ENCODE measurements at regions of chr3 and their contacts with region 1.

Region 1: GRCh38 chr3:196684548-196685407 is 27.3 kb downstream of the CEP19 start:
- DNase-seq: no peak
- ATAC-seq: peak; percentile 67

Region 2: GRCh38 chr3:196471551-196471950 is 213.2 kb before region 1 on chr3:
- intact Hi-C with region 1: no loop called
- DNase-seq: no peak
- ATAC-seq: no peak

Region 3: DNA sequence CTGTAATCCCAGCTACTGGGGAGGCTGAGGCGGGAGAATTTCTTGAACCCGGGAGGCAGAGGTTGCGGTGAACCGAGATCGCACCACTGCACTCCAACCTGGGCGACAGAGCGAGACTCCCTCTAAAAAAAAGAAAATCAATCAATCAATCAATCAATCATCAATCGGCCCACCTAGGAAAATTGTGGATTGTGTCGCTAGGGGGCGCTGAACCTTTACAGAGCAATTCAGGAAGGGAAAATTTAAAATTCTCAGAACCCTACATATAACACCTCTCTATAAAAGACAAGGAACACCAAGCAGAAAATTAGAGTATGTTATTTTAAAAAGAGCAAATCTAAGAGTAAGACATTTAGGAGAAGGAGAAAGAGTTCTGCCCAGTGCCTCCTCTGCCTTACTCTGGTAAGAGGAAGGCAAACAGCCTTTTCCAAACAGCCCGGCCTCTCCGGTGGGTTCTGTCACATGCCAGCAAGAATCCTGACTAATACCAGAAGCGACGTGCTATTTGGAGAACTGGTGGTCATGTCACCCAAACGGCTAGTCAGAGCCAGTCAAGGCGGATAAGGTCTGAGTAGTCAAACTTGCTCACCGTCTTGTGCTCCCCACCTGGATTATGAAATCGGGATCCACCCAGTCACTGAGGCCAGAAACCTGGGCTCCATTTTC is 147.3 kb before region 1 on chr3:
- intact Hi-C with region 1: loop called (anchors 10 kb)
- DNase-seq: no peak
- ATAC-seq: no peak

Region 4: DNA sequence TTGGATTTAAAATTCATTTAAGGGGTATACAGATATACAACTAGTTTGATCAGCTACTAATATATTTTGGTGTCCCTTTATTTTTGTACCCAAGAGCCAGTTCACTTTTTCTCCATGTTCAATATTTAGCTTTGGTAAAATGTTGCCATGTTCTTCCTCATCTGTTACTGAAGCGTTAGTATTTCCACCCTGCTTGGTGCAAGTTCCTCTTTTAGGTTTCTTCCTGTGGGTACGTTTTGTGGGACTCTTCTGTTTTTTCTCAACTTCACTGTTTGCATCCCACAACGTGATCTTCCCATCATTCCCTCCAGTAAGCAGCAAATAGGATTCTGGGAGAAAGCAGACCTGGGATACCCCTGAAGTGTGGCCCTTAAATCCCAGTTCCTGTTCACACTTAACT is 130.6 kb before region 1 on chr3:
- intact Hi-C with region 1: no loop called
- DNase-seq: no peak
- ATAC-seq: no peak

Measured in Right ventricle myocardium inferior (tissue), 1 donor.